Esophagus squamous epithelium (tissue), 5 donors: ENCODE measurements at regions of chr1 and their contacts with region 1.

Region 1: DNA sequence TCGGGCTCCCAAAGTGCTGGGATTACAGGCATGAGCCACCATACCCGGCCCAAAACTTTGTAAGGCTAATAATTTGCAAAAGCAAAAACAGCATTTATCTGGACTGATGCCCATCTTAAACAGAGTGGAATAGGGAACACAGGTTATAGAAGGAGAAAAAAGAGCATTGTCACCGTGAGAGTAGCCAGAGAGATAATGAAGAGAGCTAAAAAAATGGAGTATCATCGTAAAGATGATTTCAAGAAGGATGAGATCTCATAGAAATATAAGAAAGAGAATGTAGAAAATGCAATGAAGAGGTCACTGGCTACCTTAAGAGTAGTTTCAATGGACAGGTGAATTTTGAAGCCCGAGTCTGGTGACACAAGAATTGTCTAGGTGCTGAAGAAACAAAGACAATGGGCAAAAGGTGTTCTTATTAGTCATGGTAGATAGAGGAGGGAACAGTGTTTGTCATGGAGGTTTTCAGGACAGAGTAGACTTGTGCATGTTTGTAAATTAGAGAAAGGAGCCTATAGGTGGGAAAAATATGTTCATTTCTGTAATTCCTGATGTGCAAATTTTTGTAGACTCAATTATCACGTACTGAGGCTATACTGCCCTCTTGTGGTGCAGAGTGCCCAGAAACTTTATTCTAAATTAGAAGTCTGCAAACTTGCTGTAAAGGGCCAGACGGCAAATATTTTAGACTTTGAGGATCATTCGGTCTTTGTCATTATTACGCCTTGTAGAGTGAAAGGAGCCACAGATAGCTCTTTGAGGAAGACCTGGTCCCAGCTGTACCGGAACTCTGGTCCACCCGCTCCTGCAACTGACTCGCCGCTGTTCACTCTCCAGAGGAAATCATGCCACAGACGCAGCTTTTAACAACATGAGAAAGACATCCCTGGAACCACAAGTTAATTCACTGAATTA is 8.1 kb upstream of the TMEM183A start:
- DNase-seq: no peak
- H3K4me3 ChIP-seq: no peak overlapping the region
- H3K27ac ChIP-seq: no peak overlapping the region
- H3K4me1 ChIP-seq: peaks cover 0 to 6% (median 4%) of the 10 kb centered on the region in 3 donors
- H3K27me3 ChIP-seq: peaks cover 0 to 35% (median 2%) of the 10 kb centered on the region in 4 donors
- CTCF ChIP-seq: peak; percentile 67 to 88 (median 78)
- POLR2A ChIP-seq: no peak

Region 2: DNA sequence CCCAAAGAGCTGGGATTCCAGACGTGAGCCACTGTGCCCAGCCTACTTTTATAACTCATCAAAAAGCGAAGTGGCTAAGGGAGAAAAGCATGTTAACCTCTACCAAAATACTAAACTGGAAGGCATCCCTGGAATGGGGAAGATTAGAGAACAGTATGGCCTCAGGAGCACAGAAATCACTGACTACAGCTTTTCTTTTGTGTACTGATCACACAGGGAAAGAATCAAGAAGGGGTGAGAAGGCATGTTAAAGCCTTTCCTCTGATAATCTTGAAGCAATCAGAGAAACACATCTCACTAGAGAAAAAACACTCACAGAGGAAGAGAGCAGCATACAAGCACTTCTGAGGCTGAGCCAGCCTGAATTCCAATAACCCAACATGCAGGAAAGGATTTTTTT is 177.6 kb before region 1 on chr1:
- intact Hi-C with region 1: no loop called
- DNase-seq: no peak
- H3K4me3 ChIP-seq: no peak overlapping the region
- H3K27ac ChIP-seq: no peak overlapping the region
- H3K4me1 ChIP-seq: peaks cover 0 to 10% (median 0%) of the 10 kb centered on the region in 3 donors
- H3K27me3 ChIP-seq: no peaks in the 10 kb centered on the region
- CTCF ChIP-seq: no peak
- POLR2A ChIP-seq: no peak

Region 3: DNA sequence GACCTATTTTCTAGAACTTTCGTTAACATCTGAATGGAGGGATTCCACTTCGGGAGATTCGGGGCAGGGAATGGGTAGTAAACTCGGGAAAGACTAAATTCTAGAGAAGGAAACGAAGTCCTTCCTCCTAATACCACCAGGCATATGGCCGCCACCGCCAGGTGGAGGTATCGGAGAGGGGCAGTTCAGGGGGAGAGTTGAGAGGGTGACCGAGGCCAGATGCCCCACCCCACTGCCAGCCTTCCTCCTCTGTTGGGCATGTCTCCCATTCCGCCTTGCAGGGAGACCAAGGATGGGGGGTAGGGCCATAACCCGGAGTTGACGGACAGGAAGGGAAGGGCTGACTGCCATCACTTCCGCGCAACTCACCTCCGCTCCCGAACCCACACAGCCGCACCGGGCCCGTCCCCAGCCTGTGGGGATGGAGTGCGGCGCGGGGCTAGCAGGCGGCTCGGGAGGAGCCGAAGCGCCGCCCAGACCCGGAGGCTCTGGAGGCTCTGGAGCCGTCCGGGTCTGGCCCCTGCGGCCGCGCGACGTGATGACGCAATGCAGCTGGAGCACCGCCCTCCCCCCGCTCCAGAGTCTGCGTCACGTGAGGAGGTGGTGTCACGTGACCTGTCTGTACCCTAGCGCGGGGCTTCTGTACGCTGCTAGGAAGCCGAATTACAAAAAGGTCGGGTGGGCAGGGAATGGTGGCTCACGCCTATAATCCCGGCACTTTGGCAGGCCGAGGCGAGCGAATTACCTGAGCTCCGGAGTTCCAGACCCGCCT is 72.2 kb before region 1 on chr1 and contains the start of gene KLHL12:
- intact Hi-C with region 1: loop called (anchors 10 kb)
- DNase-seq: peak; percentile 83
- H3K4me3 ChIP-seq: peak within 1 kb of the TSS; percentile 58 to 95 (median 90)
- H3K27ac ChIP-seq: peak within 1 kb of the TSS; percentile 93 to 99 (median 98)
- H3K4me1 ChIP-seq: peaks cover 10 to 52% (median 21%) of the 10 kb centered on the region in 3 donors
- H3K27me3 ChIP-seq: no peaks in the 10 kb centered on the region
- CTCF ChIP-seq: peak; percentile 34 to 82 (median 64)
- POLR2A ChIP-seq: peak in 3 of 4 donors; percentile 66 to 95 (median 88)
- total RNA-seq, gene KLHL12: 11.1 to 19.9 (median 14.1) TPM